ENCODE measurements at regions of chr17 and their contacts with region 1.

Region 1: GRCh38 chr17:68205251-68205807 is 42.5 kb upstream of the AMZ2 start:
- DNase-seq: peak; percentile 95
- ATAC-seq: peak; percentile 79
- H3K4me3 ChIP-seq: peak overlapping the region in 4 of 5 experiments; percentile 71 to 92 (median 76)
- H3K4me3 Mint-ChIP-seq: peak overlapping the region; percentile 93
- H3K27ac ChIP-seq: peak overlapping the region; percentile 88 to 92
- H3K27ac Mint-ChIP-seq: peak overlapping the region; percentile 96
- H3K4me1 ChIP-seq: peaks cover 25 to 37% of the 10 kb centered on the region in 2 donors
- H3K4me1 Mint-ChIP-seq: peaks cover 39% of the 10 kb centered on the region
- H3K27me3 ChIP-seq: peaks cover 0 to 4% (median under 1%) of the 10 kb centered on the region in 4 experiments
- H3K27me3 Mint-ChIP-seq: no peaks in the 10 kb centered on the region
- CTCF ChIP-seq: peak; percentile 85

Region 2: GRCh38 chr17:68172461-68172954 is 32.8 kb before region 1 on chr17:
- CTCF ChIA-PET with region 1: interaction called, 85 read pairs
- POLR2A ChIA-PET with region 1: interaction called, 6 read pairs
- intact Hi-C with region 1: loop called (anchors 1 kb)
- DNase-seq: peak; percentile 87
- ATAC-seq: peak; percentile 94
- H3K4me3 ChIP-seq: no peak overlapping the region
- H3K4me3 Mint-ChIP-seq: no peak overlapping the region
- H3K27ac ChIP-seq: no peak overlapping the region
- H3K27ac Mint-ChIP-seq: no peak overlapping the region
- H3K4me1 ChIP-seq: peaks cover 0 to 9% of the 10 kb centered on the region in 2 donors
- H3K4me1 Mint-ChIP-seq: peaks cover 3% of the 10 kb centered on the region
- H3K27me3 ChIP-seq: no peaks in the 10 kb centered on the region
- H3K27me3 Mint-ChIP-seq: no peaks in the 10 kb centered on the region
- CTCF ChIP-seq: peak; percentile 99

Region 3: DNA sequence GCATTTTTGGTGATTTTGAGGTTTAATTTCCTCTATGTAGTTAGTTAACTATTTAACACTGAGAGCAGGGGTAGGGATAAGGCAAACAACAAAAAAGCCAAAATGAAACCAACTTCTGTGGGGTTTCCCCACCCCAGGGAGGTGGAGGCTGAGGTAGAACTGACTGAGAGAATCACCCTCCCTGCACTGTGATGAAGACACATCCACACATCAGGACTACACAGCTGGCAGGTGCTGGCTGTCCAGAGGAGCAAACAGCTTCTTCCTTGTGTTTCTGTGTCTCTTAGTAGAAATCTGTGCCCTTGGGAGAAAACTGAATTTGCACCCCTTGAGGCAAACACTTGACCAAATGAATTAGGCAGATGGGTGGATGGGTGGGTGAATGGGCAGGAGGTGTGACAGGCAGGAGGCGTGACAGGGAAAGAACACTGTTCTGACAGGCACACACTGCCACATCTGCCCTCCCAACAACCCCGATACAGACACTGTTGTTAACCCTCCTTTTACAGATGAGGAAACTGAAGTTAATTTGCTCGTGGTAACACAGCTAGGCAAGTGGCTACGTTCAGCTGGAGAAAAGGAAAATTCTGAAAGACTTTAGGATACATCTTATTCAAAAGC is 20.4 kb before region 1 on chr17:
- CTCF ChIA-PET with region 1: interaction called, 153 read pairs
- POLR2A ChIA-PET with region 1: interaction called, 113 read pairs
- intact Hi-C with region 1: loop called (anchors 1 kb)
- DNase-seq: peak; percentile 72
- ATAC-seq: peak; percentile 50
- H3K4me3 ChIP-seq: no peak overlapping the region
- H3K4me3 Mint-ChIP-seq: peak overlapping the region; percentile 96
- H3K27ac ChIP-seq: peak overlapping the region; percentile 27 to 56
- H3K27ac Mint-ChIP-seq: peak overlapping the region; percentile 83
- H3K4me1 ChIP-seq: peaks cover 53 to 59% of the 10 kb centered on the region in 2 donors
- H3K4me1 Mint-ChIP-seq: peaks cover 59% of the 10 kb centered on the region
- H3K27me3 ChIP-seq: no peaks in the 10 kb centered on the region
- H3K27me3 Mint-ChIP-seq: no peaks in the 10 kb centered on the region
- CTCF ChIP-seq: no peak

Region 4: DNA sequence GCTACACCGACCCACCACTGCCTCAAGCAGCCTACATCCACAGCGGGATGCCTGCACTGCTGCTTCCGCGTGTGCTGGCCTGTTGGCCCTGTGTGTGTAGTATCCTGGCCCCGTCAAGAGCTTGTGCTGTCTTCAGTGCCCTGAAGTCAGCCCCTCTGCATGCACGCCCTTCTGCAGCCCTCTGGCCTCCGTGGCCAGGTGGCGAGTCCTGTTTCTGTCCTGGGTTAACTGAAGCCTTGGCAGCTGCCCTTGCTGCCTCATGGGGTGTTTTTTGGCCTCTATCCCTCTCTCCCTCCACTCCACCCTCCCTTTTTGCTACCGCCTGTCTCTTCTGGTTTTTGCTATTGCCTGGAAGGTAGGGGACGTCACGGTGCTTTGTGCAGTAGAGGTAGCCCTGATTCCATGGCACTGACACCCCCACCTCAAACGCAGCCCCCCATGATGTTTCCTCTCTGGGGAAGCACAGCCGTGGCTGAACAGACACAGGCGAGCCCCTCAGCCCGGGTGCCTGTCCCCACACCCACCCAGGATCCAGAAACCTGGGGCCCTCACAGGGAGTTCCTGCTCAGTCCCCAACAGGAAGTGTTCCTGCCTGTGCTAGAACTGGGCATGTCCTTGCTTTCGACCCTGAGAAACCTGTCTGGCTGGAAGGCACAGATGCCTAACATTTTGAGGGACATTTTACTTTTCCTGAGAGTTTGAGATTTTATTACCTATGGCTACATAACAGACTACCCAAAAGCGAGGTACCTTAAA is 23.7 kb after region 1 on chr17:
- CTCF ChIA-PET with region 1: interaction called, 13 read pairs
- POLR2A ChIA-PET with region 1: no interaction called
- intact Hi-C with region 1: loop called (anchors 1 kb)
- DNase-seq: no peak
- ATAC-seq: no peak
- H3K4me3 ChIP-seq: no peak overlapping the region
- H3K4me3 Mint-ChIP-seq: no peak overlapping the region
- H3K27ac ChIP-seq: no peak overlapping the region
- H3K27ac Mint-ChIP-seq: peak overlapping the region; percentile 91
- H3K4me1 ChIP-seq: peaks cover 24 to 25% of the 10 kb centered on the region in 2 donors
- H3K4me1 Mint-ChIP-seq: peaks cover 67% of the 10 kb centered on the region
- H3K27me3 ChIP-seq: no peaks in the 10 kb centered on the region
- H3K27me3 Mint-ChIP-seq: no peaks in the 10 kb centered on the region
- CTCF ChIP-seq: no peak

Region 5: GRCh38 chr17:68247445-68248198 is 42.3 kb after region 1 on chr17 and contains the start of gene AMZ2:
- CTCF ChIA-PET with region 1: interaction called, 32 read pairs
- POLR2A ChIA-PET with region 1: interaction called, 33 read pairs
- intact Hi-C with region 1: loop called (anchors 1 kb)
- DNase-seq: peak; percentile 99
- ATAC-seq: peak; percentile 89
- H3K4me3 ChIP-seq: peak within 1 kb of the TSS; percentile 24 to 81 (median 76)
- H3K4me3 Mint-ChIP-seq: peak within 1 kb of the TSS; percentile 96
- H3K27ac ChIP-seq: peak within 1 kb of the TSS; percentile 96 to 98
- H3K27ac Mint-ChIP-seq: peak within 1 kb of the TSS; percentile 99
- H3K4me1 ChIP-seq: peaks cover 31 to 34% of the 10 kb centered on the region in 2 donors
- H3K4me1 Mint-ChIP-seq: peaks cover 54% of the 10 kb centered on the region
- H3K27me3 ChIP-seq: no peaks in the 10 kb centered on the region
- H3K27me3 Mint-ChIP-seq: no peaks in the 10 kb centered on the region
- CTCF ChIP-seq: no peak
- total RNA-seq, gene AMZ2: 70.7 and 74.3 TPM in 2 replicates

Region 6: DNA sequence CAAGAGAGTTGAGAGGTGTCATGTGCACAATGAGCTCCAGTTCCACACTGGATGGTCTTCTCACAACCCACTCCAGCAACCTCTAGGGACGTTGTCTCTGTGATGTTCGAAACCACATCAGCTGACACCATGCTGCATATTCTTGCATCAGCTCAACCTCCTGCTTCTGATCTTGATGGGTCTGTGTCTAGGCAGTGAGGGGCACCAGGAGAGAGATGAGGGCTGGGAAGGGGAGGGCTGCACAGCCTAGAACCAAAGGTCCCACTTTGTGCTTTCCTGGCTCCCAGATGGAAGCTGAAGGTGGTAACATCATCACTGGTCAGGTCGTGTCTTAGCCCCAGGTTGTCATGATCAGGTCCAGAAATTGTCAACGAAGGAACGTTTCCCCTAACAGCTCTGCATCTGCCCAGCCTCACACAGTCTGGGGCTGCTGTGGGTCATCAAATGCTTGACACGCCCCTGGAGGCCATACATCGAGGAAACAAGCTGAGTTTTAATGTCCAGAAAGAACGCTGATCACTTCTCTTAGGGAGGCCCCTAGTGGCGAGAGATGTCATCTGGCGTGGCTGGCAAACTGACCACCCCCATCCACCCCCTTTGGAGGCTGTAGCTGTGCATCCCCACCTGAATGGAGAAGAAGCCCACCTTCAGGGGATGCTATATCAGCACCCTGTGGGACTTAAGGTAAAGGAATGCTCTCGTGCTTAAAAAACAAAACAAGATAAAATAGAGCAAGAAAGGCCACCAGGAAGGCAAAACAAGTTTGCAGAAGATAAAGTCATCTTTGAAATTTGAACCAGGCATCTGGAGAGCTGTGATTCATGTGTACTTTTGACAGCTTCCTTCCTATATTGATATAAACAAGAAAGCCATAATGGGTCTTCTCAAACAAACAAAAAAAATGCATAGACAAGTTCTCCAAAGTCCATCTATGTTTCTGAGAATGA is 193.6 kb after region 1 on chr17:
- CTCF ChIA-PET with region 1: interaction called, 14 read pairs
- POLR2A ChIA-PET with region 1: no interaction called
- intact Hi-C with region 1: no loop called
- DNase-seq: peak; percentile 55
- ATAC-seq: peak; percentile 76
- H3K4me3 ChIP-seq: no peak overlapping the region
- H3K4me3 Mint-ChIP-seq: peak overlapping the region; percentile 12
- H3K27ac ChIP-seq: no peak overlapping the region
- H3K27ac Mint-ChIP-seq: peak overlapping the region; percentile 35
- H3K4me1 ChIP-seq: peaks cover 0 to 6% of the 10 kb centered on the region in 2 donors
- H3K4me1 Mint-ChIP-seq: peaks cover 8% of the 10 kb centered on the region
- H3K27me3 ChIP-seq: no peaks in the 10 kb centered on the region
- H3K27me3 Mint-ChIP-seq: peaks cover 3% of the 10 kb centered on the region
- CTCF ChIP-seq: peak; percentile 40